Sigmoid colon (tissue), 7 donors: ENCODE measurements at regions of chr11 and their contacts with region 1.

Region 1: DNA sequence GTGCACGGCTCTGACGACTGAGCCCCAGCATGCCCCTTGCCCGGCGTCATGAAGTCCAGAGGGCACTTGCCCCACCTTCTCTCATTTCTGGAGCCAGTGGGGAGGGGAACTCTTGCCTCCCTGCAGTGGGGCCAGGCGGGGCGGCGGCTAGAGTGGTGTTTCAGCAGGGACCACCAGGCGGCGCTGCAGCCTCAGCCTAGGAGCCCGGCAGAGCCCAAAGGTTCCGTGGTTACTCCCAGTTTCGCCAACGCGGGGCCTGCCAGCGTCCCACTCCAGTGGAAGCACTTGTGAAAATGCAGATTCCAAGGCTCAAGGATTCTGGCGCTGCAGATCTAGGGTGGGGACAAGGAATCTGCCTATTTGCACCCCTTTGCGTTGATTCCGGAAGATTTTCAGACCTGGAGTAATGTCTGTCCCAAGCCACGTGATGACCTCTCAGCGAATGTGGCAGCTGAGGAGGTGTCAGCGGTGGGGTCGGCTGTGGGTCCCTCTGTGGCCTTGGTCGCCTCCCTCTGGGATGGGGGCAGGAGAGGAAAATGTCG is 55.7 kb downstream of the CD82 start:
- DNase-seq: peak; percentile 83
- H3K4me3 ChIP-seq: no peak overlapping the region
- H3K27ac ChIP-seq: no peak overlapping the region
- H3K4me1 ChIP-seq: peaks cover 0 to 27% (median 27%) of the 10 kb centered on the region in 4 donors
- H3K27me3 ChIP-seq: no peaks in the 10 kb centered on the region
- CTCF ChIP-seq: peak; percentile 92 to 99 (median 95)
- EP300 ChIP-seq: no peak
- POLR2A ChIP-seq: no peak

Region 2: GRCh38 chr11:44556735-44557409 is 64.3 kb before region 1 on chr11:
- intact Hi-C with region 1: loop called (anchors 1 kb)
- DNase-seq: peak; percentile 78
- H3K4me3 ChIP-seq: no peak overlapping the region
- H3K27ac ChIP-seq: no peak overlapping the region
- H3K4me1 ChIP-seq: peaks cover 0 to 12% (median 5%) of the 10 kb centered on the region in 4 donors
- H3K27me3 ChIP-seq: no peaks in the 10 kb centered on the region
- CTCF ChIP-seq: peak; percentile 75 to 83 (median 80)
- EP300 ChIP-seq: no peak
- POLR2A ChIP-seq: no peak

Region 3: GRCh38 chr11:44609001-44609782 is 12.0 kb before region 1 on chr11:
- intact Hi-C with region 1: no loop called
- DNase-seq: no peak
- H3K4me3 ChIP-seq: no peak overlapping the region
- H3K27ac ChIP-seq: peak overlapping the region in 1 of 4 donors; percentile 58
- H3K4me1 ChIP-seq: peaks cover 0 to 43% (median 26%) of the 10 kb centered on the region in 4 donors
- H3K27me3 ChIP-seq: no peaks in the 10 kb centered on the region
- CTCF ChIP-seq: no peak
- EP300 ChIP-seq: no peak
- POLR2A ChIP-seq: no peak

Region 4: DNA sequence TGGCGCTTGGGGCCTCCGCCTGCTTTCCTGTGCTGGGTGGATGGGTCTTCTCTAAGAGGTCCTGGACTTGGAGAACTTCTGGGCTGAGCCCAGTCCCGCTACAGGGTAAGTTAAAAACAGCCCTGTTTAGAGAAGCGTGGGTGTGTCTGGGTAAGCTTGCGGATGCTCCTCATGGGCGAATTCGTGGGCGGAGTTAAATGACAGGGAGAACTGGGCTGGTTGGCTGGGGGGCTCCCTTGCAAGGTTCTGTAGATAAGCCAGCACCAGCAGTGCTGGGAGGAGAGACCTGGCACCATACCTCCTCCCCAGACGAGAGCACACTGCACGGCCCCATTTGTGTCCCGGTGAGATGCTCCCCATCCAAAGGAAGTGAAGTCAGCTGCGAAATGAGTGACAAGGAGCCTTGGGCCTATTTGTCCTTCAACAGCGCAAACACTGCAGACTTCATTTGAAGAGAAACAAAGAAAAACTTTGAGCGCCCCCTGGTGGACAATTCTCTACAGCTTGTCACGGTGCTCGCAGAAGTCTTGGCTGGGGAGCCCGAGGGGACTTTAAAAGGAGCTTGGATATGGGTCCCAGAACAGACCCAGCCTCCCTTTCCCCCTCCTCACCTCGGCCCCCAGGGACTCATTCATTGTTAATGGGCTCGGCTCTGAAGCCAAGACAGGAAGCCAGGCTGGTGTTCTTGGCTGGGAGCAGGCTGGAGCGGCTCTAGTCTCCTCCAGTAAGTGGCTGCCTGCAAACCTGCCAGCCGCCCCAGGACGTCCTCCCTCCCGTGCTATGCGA is 290.0 kb after region 1 on chr11:
- intact Hi-C with region 1: loop called (anchors 1 kb)
- DNase-seq: peak; percentile 92
- H3K4me3 ChIP-seq: no peak overlapping the region
- H3K27ac ChIP-seq: peak overlapping the region in 2 of 4 donors; percentile 11 to 49
- H3K4me1 ChIP-seq: peaks cover 0 to 16% (median 15%) of the 10 kb centered on the region in 4 donors
- H3K27me3 ChIP-seq: no peaks in the 10 kb centered on the region
- CTCF ChIP-seq: peak; percentile 71 to 87 (median 82)
- EP300 ChIP-seq: no peak
- POLR2A ChIP-seq: no peak